GM12878 (cell line): ENCODE measurements at regions of chr7 and their contacts with region 1.

Region 1: DNA sequence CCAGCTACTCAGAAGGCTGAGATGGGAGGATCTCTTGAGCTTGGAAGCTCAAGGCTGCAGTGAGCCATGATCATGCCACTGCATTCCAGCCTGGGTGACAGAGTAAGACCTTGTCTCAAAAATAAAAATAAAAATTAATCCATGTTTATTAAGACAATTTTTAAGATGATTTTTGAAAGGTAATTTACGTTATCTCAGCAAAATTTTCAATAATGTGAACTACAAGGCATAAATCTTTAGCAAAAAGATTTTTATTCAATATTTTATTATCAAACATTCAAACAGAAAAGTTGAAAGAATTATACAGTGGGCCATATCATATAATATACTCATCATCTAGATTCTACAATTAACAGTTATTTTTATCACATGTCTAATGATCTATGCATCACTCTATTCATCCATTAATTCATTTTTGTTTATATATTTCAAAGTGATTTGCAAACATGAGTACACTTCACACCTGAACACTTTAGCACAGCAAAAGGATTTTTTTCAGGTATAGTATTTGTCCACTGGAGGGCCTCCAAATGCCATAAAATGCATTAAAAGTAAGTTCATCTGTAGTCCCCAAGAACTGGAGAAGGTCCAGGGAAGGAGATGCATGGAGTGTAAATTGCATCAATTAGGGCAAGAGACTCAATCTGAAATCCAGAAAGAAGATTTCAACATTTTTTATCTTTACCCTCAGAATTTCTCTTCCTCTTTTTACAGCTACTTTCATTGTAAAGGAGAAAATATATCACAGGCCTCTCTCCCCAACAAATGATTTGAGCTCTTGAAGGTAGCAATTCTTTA is 38.6 kb upstream of the RSBN1L start:
- DNase-seq: peak; percentile 12
- ATAC-seq: peak; percentile 87
- H3K4me3 ChIP-seq: no peak overlapping the region
- H3K27ac ChIP-seq: no peak overlapping the region
- H3K4me1 ChIP-seq: no peaks in the 10 kb centered on the region
- H3K27me3 ChIP-seq: no peaks in the 10 kb centered on the region
- CTCF ChIP-seq: peak; percentile 50 to 67 (median 54)
- EP300 ChIP-seq: no peak
- POLR2A ChIP-seq: no peak
- RAD21 ChIP-seq: peak; percentile 94

Region 2: GRCh38 chr7:77674878-77675277 is 17.3 kb after region 1 on chr7:
- CTCF ChIA-PET with region 1: interaction called, 13 read pairs
- POLR2A ChIA-PET with region 1: no interaction called
- RAD21 ChIA-PET with region 1: no interaction called
- SMC1A ChIA-PET with region 1: interaction called, 6 read pairs
- in situ Hi-C with region 1: no loop called
- intact Hi-C with region 1: no loop called
- DNase-seq: no peak
- ATAC-seq: peak; percentile 74
- H3K4me3 ChIP-seq: no peak overlapping the region
- H3K27ac ChIP-seq: no peak overlapping the region
- H3K4me1 ChIP-seq: no peaks in the 10 kb centered on the region
- H3K27me3 ChIP-seq: no peaks in the 10 kb centered on the region
- CTCF ChIP-seq: no peak
- EP300 ChIP-seq: no peak
- POLR2A ChIP-seq: no peak
- RAD21 ChIP-seq: no peak

Region 3: GRCh38 chr7:77759294-77759889 is 101.8 kb after region 1 on chr7:
- CTCF ChIA-PET with region 1: interaction called, 225 read pairs
- POLR2A ChIA-PET with region 1: interaction called, 3 read pairs
- RAD21 ChIA-PET with region 1: interaction called, 58 read pairs
- SMC1A ChIA-PET with region 1: interaction called, 75 read pairs
- in situ Hi-C with region 1: loop called (anchors 5 kb)
- intact Hi-C with region 1: loop called (anchors 1 kb)
- DNase-seq: peak; percentile 38
- ATAC-seq: peak; percentile 83
- H3K4me3 ChIP-seq: no peak overlapping the region
- H3K27ac ChIP-seq: no peak overlapping the region
- H3K4me1 ChIP-seq: peaks cover 3% of the 10 kb centered on the region; the same call in 1 of the 2 replicates
- H3K27me3 ChIP-seq: no peaks in the 10 kb centered on the region
- CTCF ChIP-seq: peak; percentile 61 to 79 (median 78)
- EP300 ChIP-seq: no peak
- POLR2A ChIP-seq: no peak
- RAD21 ChIP-seq: peak; percentile 96

Region 4: DNA sequence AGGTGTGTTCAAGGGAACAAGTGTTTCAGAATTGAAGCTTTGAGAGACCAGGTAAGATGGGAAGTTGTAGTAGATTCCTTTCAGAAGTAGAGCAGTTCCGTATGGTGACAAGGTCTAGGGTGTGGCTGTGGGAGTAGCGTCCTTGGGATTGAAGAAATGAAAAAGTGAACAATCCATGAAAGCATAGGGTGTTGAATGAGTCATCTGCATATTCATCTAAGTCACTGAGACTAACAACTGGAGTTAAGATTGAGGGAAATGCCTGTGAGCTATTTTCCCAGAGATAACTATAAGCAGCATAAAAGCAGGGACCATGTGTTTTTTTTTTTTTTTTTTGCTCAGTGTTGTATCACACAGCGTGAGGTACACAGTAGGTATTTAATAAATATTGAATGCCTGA is 275.8 kb after region 1 on chr7:
- CTCF ChIA-PET with region 1: interaction called, 24 read pairs
- POLR2A ChIA-PET with region 1: no interaction called
- RAD21 ChIA-PET with region 1: interaction called, 6 read pairs
- SMC1A ChIA-PET with region 1: interaction called, 17 read pairs
- in situ Hi-C with region 1: loop called (anchors 10 kb)
- intact Hi-C with region 1: loop called (anchors 5 kb)
- DNase-seq: no peak
- ATAC-seq: no peak
- H3K4me3 ChIP-seq: no peak overlapping the region
- H3K27ac ChIP-seq: no peak overlapping the region
- H3K4me1 ChIP-seq: no peaks in the 10 kb centered on the region
- H3K27me3 ChIP-seq: no peaks in the 10 kb centered on the region
- CTCF ChIP-seq: no peak
- EP300 ChIP-seq: no peak
- POLR2A ChIP-seq: no peak
- RAD21 ChIP-seq: no peak

Region 5: DNA sequence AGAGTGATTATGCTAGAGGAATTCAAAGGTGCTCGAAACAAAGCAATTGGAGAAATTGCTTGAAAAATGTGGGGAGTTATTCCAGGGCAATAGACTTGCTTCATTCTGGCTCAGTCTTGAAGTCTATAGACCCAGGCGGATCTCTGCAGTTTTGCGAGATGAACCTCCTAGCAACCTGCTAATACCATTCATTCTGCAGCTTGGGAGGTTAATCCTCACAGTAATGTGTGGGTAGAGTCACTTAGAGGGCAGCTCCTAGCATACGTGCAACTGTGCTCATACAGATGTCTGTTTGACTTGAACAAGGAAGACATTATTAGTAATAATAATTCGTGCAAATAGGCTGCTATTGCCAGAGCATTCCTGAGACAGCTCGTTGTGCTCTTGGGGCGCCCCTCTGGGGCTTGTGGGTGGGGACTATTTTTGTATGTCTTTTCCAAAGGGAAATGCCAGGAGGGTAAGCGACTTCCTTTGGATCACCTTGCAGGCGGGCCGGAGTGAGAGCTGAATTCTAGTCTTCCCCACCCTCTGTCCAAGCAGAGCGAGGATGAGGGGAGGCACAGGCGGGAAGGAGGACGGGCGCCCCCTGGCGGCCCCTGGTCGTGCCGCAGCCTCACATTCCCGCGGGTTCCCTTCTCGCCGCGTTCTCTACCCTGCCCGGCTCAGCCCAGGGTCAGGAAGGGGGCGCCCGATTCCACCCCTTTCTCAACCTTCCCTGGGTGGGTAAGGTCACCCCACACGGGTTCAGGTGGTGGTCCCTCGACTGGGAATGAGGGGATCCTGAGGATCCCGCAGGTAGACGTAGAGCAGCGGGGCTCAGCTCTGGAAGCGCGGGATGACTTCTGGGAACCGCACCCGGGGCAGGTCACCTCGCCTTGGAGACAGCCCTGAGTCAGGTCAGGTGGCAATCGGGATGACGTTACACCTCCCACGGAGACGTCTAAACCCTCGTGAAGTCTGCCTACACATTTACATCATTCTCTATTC is 382.5 kb after region 1 on chr7:
- CTCF ChIA-PET with region 1: interaction called, 20 read pairs
- POLR2A ChIA-PET with region 1: no interaction called
- RAD21 ChIA-PET with region 1: interaction called, 11 read pairs
- SMC1A ChIA-PET with region 1: interaction called, 4 read pairs
- in situ Hi-C with region 1: loop called (anchors 10 kb)
- intact Hi-C with region 1: loop called (anchors 5 kb)
- DNase-seq: no peak
- ATAC-seq: peak; percentile 98
- H3K4me3 ChIP-seq: no peak overlapping the region
- H3K27ac ChIP-seq: no peak overlapping the region
- H3K4me1 ChIP-seq: no peaks in the 10 kb centered on the region
- H3K27me3 ChIP-seq: no peaks in the 10 kb centered on the region; a peak in 2 of 4 replicates
- CTCF ChIP-seq: peak; percentile 81 to 92 (median 85)
- EP300 ChIP-seq: no peak
- POLR2A ChIP-seq: no peak
- RAD21 ChIP-seq: peak; percentile 67